SK-N-SH (cell line): ENCODE measurements at regions of chr11 and their contacts with region 1.

Region 1: DNA sequence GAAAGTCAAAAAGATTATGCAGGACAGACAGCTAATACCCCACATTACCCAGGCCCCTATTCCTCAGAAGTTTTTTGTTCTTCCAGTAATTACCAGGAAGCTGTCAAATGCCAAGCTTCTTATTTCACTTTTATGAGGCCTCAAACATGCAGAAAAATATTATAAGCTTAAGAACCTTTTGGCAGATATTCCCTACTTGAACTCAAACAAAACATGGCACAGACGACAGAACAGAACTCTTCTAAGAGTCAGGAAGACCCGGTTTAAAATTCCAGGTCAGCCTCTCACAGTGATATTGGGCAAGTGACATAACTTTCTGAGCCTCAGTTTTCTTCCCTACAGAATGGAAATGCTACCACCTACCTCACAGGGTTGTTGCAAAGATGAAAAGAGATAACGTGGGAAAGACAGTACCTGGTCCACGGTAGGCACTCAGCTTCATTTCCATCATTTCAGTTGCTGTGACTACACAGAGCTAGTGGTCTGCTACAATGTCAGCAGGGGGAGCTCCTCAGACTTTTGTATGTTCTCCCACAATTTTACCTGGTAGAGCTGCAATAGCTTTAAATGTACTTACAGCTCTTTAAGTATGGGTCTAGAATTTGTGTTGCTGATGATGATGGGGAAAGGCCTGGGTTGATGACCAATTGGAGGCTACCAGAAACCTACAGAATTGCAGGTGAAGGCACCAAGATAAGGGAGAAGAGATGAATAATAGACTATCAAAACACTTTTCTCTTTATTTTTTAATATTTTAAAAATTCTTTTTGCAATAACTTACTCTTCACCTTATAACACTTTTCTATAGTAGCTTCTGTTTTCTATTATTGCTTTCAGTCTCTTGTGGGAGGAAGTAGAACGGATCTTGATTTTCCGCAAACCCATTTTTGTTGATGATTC is 98.3 kb upstream of the CHRM4 start:
- DNase-seq: peak; percentile 54
- H3K4me3 ChIP-seq: no peak overlapping the region
- H3K27ac ChIP-seq: no peak overlapping the region
- H3K4me1 ChIP-seq: peaks cover 7 to 21% of the 10 kb centered on the region in 2 experiments; a peak in 2 of 4 replicates
- H3K27me3 ChIP-seq: no peaks in the 10 kb centered on the region
- CTCF ChIP-seq: peak; percentile 72
- EP300 ChIP-seq: no peak
- RAD21 ChIP-seq: peak; percentile 74

Region 2: GRCh38 chr11:46475926-46476545 is 13.9 kb before region 1 on chr11:
- CTCF ChIA-PET with region 1: interaction called, 19 read pairs
- POLR2A ChIA-PET with region 1: no interaction called
- DNase-seq: no peak
- H3K4me3 ChIP-seq: no peak overlapping the region
- H3K27ac ChIP-seq: no peak overlapping the region
- H3K4me1 ChIP-seq: peaks cover 3 to 19% of the 10 kb centered on the region in 2 experiments; a peak in 3 of 4 replicates
- H3K27me3 ChIP-seq: no peaks in the 10 kb centered on the region
- CTCF ChIP-seq: no peak
- EP300 ChIP-seq: no peak
- RAD21 ChIP-seq: no peak

Region 3: GRCh38 chr11:46504817-46505613 is 15.1 kb after region 1 on chr11:
- CTCF ChIA-PET with region 1: interaction called, 63 read pairs
- POLR2A ChIA-PET with region 1: no interaction called
- DNase-seq: no peak
- H3K4me3 ChIP-seq: no peak overlapping the region
- H3K27ac ChIP-seq: no peak overlapping the region
- H3K4me1 ChIP-seq: peaks cover 0 to 9% of the 10 kb centered on the region in 2 experiments; a peak in 1 of 4 replicates
- H3K27me3 ChIP-seq: no peaks in the 10 kb centered on the region
- CTCF ChIP-seq: no peak
- EP300 ChIP-seq: no peak
- RAD21 ChIP-seq: no peak

Region 4: GRCh38 chr11:46521961-46522681 is 32.2 kb after region 1 on chr11:
- CTCF ChIA-PET with region 1: interaction called, 14 read pairs
- POLR2A ChIA-PET with region 1: no interaction called
- DNase-seq: no peak
- H3K4me3 ChIP-seq: no peak overlapping the region
- H3K27ac ChIP-seq: no peak overlapping the region
- H3K4me1 ChIP-seq: peaks cover 6 to 40% of the 10 kb centered on the region in 2 experiments; a peak in 3 of 4 replicates
- H3K27me3 ChIP-seq: no peaks in the 10 kb centered on the region
- CTCF ChIP-seq: peak; percentile 48
- EP300 ChIP-seq: no peak
- RAD21 ChIP-seq: peak; percentile 38

Region 5: DNA sequence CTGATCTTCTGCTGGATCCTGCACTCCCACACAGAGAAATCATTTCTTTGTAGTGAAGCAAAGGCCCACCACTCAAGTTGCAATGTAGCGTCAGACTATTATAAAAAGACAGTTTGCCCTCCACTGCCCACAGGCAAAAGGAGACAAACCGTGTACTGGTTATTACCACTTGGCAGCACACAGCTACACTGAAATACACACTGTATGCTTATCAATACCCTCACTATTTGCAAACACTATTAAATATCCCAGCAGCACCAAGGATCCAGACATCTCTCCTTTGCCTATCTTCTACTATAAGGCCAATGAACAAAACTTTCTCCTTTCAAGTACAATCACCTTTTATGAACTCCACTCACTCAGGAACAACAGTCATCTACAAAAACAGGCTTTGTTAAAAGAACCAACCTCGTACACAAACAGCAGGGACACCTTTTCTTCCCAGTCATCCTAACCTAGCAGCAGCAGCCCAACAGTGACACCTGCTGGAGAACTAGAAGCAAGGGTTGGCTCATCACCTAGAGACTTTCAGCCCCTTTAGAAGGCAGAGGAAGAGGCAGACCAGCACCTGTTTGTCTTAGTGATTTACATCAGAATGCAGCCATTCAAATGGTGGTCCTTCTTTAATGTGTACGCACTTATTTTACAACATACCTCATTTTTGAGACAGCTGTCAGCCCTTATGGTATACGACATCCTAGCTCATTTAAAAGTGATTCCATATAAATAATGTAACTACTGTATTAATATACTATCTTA is 47.8 kb after region 1 on chr11:
- CTCF ChIA-PET with region 1: interaction called, 131 read pairs
- POLR2A ChIA-PET with region 1: no interaction called
- DNase-seq: peak; percentile 77
- H3K4me3 ChIP-seq: peak overlapping the region in 1 of 2 experiments; percentile 28; a peak in 1 of 4 replicates
- H3K27ac ChIP-seq: no peak overlapping the region
- H3K4me1 ChIP-seq: peaks cover 0 to 6% of the 10 kb centered on the region in 2 experiments; a peak in 2 of 4 replicates
- H3K27me3 ChIP-seq: no peaks in the 10 kb centered on the region
- CTCF ChIP-seq: peak; percentile 92
- EP300 ChIP-seq: no peak
- RAD21 ChIP-seq: peak; percentile 96

Region 6: DNA sequence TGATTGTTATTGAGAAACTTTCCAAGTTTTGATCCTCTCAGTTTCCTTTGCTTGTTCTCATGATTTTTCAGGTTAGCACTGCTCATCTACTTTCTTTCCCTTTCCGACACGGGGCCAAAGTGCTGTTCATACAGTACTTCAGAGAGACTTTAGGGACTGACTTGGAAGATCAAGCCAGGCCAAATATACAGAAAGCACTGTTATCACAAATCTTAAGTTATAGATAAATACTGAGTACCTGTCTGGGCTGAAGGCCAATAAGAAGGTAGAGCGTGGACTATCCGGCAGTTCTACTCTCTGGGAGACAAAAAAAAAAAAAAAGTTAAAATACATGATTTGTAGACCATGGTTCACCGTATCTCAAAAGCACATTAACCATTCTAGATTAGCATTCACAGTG is 57.7 kb after region 1 on chr11:
- CTCF ChIA-PET with region 1: interaction called, 16 read pairs
- POLR2A ChIA-PET with region 1: no interaction called
- DNase-seq: no peak
- H3K4me3 ChIP-seq: no peak overlapping the region
- H3K27ac ChIP-seq: no peak overlapping the region
- H3K4me1 ChIP-seq: no peaks in the 10 kb centered on the region
- H3K27me3 ChIP-seq: no peaks in the 10 kb centered on the region
- CTCF ChIP-seq: no peak
- EP300 ChIP-seq: no peak
- RAD21 ChIP-seq: no peak